ENCODE measurements at regions of chr11 and their contacts with region 1.

Region 1: DNA sequence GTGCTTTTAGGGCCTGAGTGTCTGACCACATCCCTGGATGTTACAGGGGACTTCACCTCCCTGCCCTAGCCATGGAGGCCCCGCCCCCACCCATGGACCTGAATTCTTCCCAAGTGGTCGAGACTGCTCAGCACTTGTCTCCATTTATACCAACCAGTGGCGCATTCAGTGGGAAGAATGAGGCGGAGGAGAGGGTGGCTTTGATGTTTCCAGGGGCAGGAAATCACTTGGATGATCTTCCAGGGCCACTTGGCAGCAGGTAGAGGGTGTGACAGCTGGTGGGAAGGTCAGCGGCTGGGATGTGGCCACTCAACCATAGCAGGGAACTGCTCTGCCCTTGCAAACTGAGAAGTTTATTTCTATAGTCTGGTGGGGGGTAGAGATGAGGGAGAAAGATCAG is 155.1 kb upstream of the BLID start:
- H3K4me3 Mint-ChIP-seq: no peak overlapping the region
- H3K27ac Mint-ChIP-seq: no peak overlapping the region
- H3K4me1 Mint-ChIP-seq: peaks cover 9% of the 10 kb centered on the region
- H3K27me3 Mint-ChIP-seq: no peaks in the 10 kb centered on the region

Region 2: GRCh38 chr11:122229481-122230384 is 41.4 kb before region 1 on chr11:
- intact Hi-C with region 1: loop called (anchors 10 kb)
- H3K4me3 Mint-ChIP-seq: no peak overlapping the region
- H3K27ac Mint-ChIP-seq: no peak overlapping the region
- H3K4me1 Mint-ChIP-seq: peaks cover 8% of the 10 kb centered on the region
- H3K27me3 Mint-ChIP-seq: no peaks in the 10 kb centered on the region

Measured in dendritic cell treated with granulocyte-macrophage colony-stimulating factor and Interleukin-4, amounts not matched to agents 40 ng/mL and 50 ng/mL, for 4 days (primary cell).